Heart right ventricle (tissue), 16 donors: ENCODE measurements at regions of chr2 and their contacts with region 1.

Region 1: DNA sequence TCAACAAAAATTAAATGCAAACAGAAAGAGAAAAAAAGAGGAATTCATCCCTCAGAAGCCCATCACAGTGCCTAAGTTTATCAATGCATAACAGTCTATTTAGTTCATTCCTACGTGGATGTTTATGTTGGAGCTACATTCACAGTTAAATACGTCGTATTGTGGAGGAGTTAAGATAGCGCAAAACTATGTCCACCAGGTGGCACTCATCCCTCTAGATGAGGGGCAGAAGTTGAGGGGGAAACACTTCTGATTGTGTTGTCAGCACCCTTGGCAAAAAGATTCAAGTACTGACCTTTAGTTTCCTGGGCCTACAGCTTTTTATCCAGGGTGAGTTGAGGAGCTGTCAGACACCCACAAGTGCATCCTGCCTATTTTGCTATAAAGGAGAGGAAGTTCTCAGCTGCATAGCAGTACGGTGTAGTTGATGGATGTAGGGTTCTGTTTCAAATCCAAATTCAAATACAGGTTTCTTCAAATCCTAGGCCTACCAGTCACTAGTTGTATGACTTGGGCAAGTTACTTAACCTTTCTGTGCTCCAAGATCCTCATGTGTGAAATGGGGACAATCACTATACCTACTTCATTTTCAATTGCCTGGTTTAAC is 26.8 kb upstream of the MYO1B start:
- DNase-seq: peak in 1 of 2 donors; percentile 46
- ATAC-seq: peak in 7 of 8 donors; percentile 25 to 75 (median 56)
- H3K4me3 ChIP-seq: no peak overlapping the region
- H3K27ac ChIP-seq: peak overlapping the region in 2 of 10 donors; percentile 2 to 51
- H3K4me1 ChIP-seq: peaks cover 0 to 28% (median 16%) of the 10 kb centered on the region in 9 donors
- H3K27me3 ChIP-seq: no peaks in the 10 kb centered on the region
- CTCF ChIP-seq: peak; percentile 46 to 79 (median 66)

Region 2: GRCh38 chr2:191165176-191165643 is 53.2 kb before region 1 on chr2:
- intact Hi-C with region 1: loop called in 5 of 10 experiments (anchors 5 to 10 kb)
- DNase-seq: no peak
- ATAC-seq: peak; percentile 75 to 90 (median 82)
- H3K4me3 ChIP-seq: no peak overlapping the region
- H3K27ac ChIP-seq: peak overlapping the region in 4 of 10 donors; percentile 36 to 61 (median 58)
- H3K4me1 ChIP-seq: peaks cover 0 to 34% (median 23%) of the 10 kb centered on the region in 9 donors
- H3K27me3 ChIP-seq: no peaks in the 10 kb centered on the region
- CTCF ChIP-seq: peak; percentile 47 to 84 (median 72)

Region 3: GRCh38 chr2:191178806-191179514 is 39.4 kb before region 1 on chr2:
- intact Hi-C with region 1: no loop called
- DNase-seq: peak; percentile 18 to 30
- ATAC-seq: peak in 6 of 8 donors; percentile 42 to 93 (median 78)
- H3K4me3 ChIP-seq: no peak overlapping the region
- H3K27ac ChIP-seq: peak overlapping the region in 1 of 10 donors; percentile 18
- H3K4me1 ChIP-seq: peaks cover 0 to 20% (median 0%) of the 10 kb centered on the region in 9 donors
- H3K27me3 ChIP-seq: no peaks in the 10 kb centered on the region
- CTCF ChIP-seq: no peak

Region 4: DNA sequence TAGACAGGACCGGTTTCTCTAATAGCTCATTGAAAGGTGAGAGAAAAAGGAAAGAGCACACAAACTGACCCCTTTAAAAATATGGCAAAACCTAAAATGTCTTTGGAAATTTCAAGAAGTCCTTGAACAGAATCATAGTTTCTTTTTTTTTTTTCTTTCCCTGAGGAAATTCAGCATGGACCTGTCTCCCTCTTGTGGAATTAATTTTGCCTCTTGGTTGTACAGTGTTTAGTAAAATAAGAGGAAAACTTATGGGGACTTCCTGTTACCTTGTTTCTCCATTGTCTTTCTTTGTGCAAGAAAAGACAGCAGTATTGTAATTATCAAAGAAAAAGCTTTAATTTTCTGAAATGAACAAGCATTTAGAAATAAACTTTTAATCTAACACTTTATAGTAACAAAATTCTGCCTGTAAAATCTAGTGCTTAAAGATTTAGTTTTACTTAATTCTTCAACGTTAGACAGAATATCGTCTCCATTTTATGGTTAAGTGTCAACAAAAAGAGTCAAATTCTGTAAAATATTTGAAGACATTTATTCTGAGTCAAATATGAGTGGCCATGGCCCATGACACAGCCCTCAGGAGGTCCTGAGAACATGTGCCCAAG is 283.3 kb after region 1 on chr2:
- intact Hi-C with region 1: loop called in 6 of 10 experiments (anchors 1 to 5 kb)
- DNase-seq: no peak
- ATAC-seq: peak in 6 of 8 donors; percentile 50 to 77 (median 64)
- H3K4me3 ChIP-seq: no peak overlapping the region
- H3K27ac ChIP-seq: peak overlapping the region in 7 of 10 donors; percentile 41 to 61 (median 51)
- H3K4me1 ChIP-seq: peaks cover 0 to 26% (median 7%) of the 10 kb centered on the region in 9 donors
- H3K27me3 ChIP-seq: no peaks in the 10 kb centered on the region
- CTCF ChIP-seq: peak; percentile 42 to 83 (median 72)

Region 5: GRCh38 chr2:191521608-191522208 is 303.3 kb after region 1 on chr2:
- intact Hi-C with region 1: loop called in 2 of 10 experiments (anchors 1 to 5 kb)
- DNase-seq: no peak
- ATAC-seq: no peak
- H3K4me3 ChIP-seq: no peak overlapping the region
- H3K27ac ChIP-seq: no peak overlapping the region
- H3K4me1 ChIP-seq: no peaks in the 10 kb centered on the region
- H3K27me3 ChIP-seq: no peaks in the 10 kb centered on the region
- CTCF ChIP-seq: peak; percentile 59 to 92 (median 83)